PC-3 (cell line): ENCODE measurements at regions of chr3 and their contacts with region 1.

Region 1: GRCh38 chr3:98901392-98902350 is at the start of gene DCBLD2:
- DNase-seq: peak; percentile 99
- ATAC-seq: peak; percentile 90
- H3K4me3 ChIP-seq: peak within 1 kb of the TSS; percentile 90
- H3K27ac ChIP-seq: peak within 1 kb of the TSS; percentile 80
- H3K4me1 ChIP-seq: peaks cover 46% of the 10 kb centered on the region
- H3K27me3 ChIP-seq: no peaks in the 10 kb centered on the region
- CTCF ChIP-seq: no peak
- total RNA-seq, gene DCBLD2: 265 and 307 TPM in 2 replicates

Region 2: GRCh38 chr3:98593046-98593936 is 308.4 kb before region 1 on chr3 and contains the start of gene CPOX:
- CTCF ChIA-PET with region 1: no interaction called
- POLR2A ChIA-PET with region 1: no interaction called
- intact Hi-C with region 1: loop called (anchors 5 kb)
- DNase-seq: peak; percentile 96
- ATAC-seq: peak; percentile 97
- H3K4me3 ChIP-seq: peak within 1 kb of the TSS; percentile 97
- H3K27ac ChIP-seq: peak within 1 kb of the TSS; percentile 15
- H3K4me1 ChIP-seq: peaks cover 12% of the 10 kb centered on the region
- H3K27me3 ChIP-seq: no peaks in the 10 kb centered on the region
- CTCF ChIP-seq: no peak
- total RNA-seq, gene CPOX: 62.0 and 86.2 TPM in 2 replicates

Region 3: DNA sequence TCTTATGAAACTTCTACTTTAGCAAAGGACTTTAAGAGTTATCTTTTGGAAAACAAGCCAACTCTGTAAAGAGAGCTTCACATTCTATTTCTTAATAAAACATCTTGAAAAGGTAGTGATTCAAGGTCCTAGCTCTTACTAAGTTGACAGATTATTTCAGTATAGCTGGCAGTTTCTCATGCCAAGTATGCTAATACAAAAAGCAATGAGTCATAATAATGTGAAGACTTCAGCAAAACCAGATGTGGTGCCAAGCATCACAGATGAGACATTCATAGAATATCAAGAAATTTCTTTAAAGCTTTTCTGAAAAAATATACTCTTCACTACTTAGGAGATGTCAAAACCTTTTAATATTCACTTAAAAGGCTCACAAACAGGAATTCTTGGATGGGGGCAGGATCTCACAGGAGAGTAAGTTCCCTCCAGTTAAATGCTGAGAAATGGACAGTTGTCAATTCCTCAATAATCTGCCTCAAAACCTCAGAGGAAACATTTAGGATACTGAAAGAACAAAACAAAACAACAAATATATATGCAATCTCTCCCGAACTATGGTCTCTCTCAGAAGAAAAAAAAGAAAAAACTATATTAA is 45.8 kb before region 1 on chr3:
- CTCF ChIA-PET with region 1: no interaction called
- POLR2A ChIA-PET with region 1: interaction called, 12 read pairs
- intact Hi-C with region 1: loop called (anchors 5 kb)
- DNase-seq: peak; percentile 86
- ATAC-seq: peak; percentile 88
- H3K4me3 ChIP-seq: no peak overlapping the region
- H3K27ac ChIP-seq: 0 out of 2 replicates have a peak overlapping the region, but pooled peaks have one; percentile 5
- H3K4me1 ChIP-seq: peaks cover 16% of the 10 kb centered on the region
- H3K27me3 ChIP-seq: no peaks in the 10 kb centered on the region
- CTCF ChIP-seq: no peak

Region 4: GRCh38 chr3:98923967-98924366 is 22.3 kb after region 1 on chr3:
- CTCF ChIA-PET with region 1: interaction called, 4 read pairs
- POLR2A ChIA-PET with region 1: interaction called, 13 read pairs
- intact Hi-C with region 1: loop called (anchors 1 kb)
- DNase-seq: no peak
- ATAC-seq: no peak
- H3K4me3 ChIP-seq: no peak overlapping the region
- H3K27ac ChIP-seq: peak overlapping the region; percentile 90
- H3K4me1 ChIP-seq: peaks cover 34% of the 10 kb centered on the region
- H3K27me3 ChIP-seq: no peaks in the 10 kb centered on the region
- CTCF ChIP-seq: no peak

Region 5: DNA sequence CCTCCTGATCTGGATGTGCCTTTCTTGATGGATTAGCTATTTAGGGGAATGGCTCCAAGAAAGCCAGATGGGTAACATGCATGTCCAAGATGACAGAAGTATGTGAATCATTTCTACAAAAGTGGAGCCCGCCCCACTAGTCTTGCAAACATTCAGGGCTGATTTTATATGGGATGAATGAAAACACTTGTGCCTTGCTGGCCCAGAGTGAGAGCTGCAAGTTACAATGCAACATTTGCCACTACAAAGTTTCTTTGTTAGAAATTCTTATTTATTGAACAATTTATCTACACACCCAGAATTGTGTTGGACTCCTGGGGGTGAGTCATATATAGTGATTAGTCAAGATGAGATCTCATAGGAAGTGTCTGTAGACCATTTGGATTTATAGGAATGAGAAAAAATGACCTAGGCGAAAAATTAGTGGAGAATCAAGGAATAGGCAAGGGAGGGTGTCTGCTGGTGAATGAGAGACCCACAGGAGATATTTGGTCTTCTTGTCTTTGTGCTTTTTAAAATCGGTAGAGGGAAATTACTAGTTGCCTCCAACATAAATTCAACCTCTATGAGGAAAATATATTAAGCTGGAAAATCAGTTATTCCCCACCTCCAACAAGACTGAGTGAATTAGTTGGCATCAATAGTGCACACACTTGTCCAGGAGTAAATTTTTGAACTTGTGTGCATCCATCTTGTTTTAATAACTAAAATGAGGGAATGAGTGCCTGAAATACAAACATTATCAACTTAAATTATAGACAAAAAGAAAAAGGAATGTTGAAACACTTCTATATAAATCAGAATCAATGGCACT is 53.3 kb after region 1 on chr3:
- CTCF ChIA-PET with region 1: interaction called, 3 read pairs
- POLR2A ChIA-PET with region 1: interaction called, 27 read pairs
- intact Hi-C with region 1: loop called (anchors 2 kb)
- DNase-seq: peak; percentile 87
- ATAC-seq: peak; percentile 86
- H3K4me3 ChIP-seq: no peak overlapping the region
- H3K27ac ChIP-seq: peak overlapping the region; percentile 81
- H3K4me1 ChIP-seq: peaks cover 36% of the 10 kb centered on the region
- H3K27me3 ChIP-seq: no peaks in the 10 kb centered on the region
- CTCF ChIP-seq: no peak

Region 6: DNA sequence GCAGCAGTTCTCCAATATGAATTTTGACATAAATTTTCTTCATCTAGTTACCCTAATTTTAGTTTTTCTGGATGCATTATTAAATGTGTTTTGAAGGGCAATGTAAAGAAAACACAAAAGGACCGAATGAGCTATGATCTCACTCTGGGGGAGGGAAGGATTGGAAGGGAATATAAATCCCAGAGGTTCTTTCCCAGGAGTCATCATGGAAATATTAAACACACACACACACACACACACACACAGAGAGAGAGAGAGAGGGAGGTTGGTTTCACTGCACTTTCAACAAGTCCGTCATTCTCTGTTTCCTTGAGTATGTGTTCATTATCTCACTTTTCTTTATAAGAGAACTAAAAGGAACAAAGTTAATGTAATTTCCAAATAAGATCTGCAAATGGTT is 70.5 kb after region 1 on chr3:
- CTCF ChIA-PET with region 1: interaction called, 3 read pairs
- POLR2A ChIA-PET with region 1: interaction called, 35 read pairs
- intact Hi-C with region 1: loop called (anchors 2 kb)
- DNase-seq: peak; percentile 92
- ATAC-seq: peak; percentile 47
- H3K4me3 ChIP-seq: peak overlapping the region; percentile 34; the same call in 1 of the 2 replicates
- H3K27ac ChIP-seq: peak overlapping the region; percentile 98
- H3K4me1 ChIP-seq: peaks cover 82% of the 10 kb centered on the region
- H3K27me3 ChIP-seq: no peaks in the 10 kb centered on the region
- CTCF ChIP-seq: no peak

Region 7: DNA sequence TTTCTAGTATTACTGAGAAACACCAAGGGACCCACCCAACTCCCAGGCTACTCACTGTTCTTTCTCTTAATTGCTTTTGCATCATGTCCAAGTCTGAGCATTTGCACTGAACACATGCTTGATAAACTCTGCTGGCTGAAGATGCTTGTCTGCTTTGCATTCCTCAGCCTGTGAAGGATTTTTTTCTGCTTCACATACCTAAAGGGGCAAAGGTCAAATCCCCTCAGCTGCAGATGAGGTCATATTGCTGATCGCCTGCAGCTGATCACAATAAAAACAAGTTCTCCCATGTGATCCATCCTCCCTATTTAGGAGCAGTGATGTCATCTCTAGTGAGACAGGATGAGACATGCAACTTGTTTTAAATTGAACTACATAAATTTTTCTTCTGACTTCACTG is 84.4 kb after region 1 on chr3:
- CTCF ChIA-PET with region 1: interaction called, 4 read pairs
- POLR2A ChIA-PET with region 1: interaction called, 33 read pairs
- intact Hi-C with region 1: loop called (anchors 1 kb)
- DNase-seq: peak; percentile 53
- ATAC-seq: no peak
- H3K4me3 ChIP-seq: no peak overlapping the region
- H3K27ac ChIP-seq: peak overlapping the region; percentile 65
- H3K4me1 ChIP-seq: peaks cover 52% of the 10 kb centered on the region
- H3K27me3 ChIP-seq: no peaks in the 10 kb centered on the region
- CTCF ChIP-seq: no peak